Mammary epithelial cell (primary cell): ENCODE measurements at regions of chr9 and their contacts with region 1.

Region 1: DNA sequence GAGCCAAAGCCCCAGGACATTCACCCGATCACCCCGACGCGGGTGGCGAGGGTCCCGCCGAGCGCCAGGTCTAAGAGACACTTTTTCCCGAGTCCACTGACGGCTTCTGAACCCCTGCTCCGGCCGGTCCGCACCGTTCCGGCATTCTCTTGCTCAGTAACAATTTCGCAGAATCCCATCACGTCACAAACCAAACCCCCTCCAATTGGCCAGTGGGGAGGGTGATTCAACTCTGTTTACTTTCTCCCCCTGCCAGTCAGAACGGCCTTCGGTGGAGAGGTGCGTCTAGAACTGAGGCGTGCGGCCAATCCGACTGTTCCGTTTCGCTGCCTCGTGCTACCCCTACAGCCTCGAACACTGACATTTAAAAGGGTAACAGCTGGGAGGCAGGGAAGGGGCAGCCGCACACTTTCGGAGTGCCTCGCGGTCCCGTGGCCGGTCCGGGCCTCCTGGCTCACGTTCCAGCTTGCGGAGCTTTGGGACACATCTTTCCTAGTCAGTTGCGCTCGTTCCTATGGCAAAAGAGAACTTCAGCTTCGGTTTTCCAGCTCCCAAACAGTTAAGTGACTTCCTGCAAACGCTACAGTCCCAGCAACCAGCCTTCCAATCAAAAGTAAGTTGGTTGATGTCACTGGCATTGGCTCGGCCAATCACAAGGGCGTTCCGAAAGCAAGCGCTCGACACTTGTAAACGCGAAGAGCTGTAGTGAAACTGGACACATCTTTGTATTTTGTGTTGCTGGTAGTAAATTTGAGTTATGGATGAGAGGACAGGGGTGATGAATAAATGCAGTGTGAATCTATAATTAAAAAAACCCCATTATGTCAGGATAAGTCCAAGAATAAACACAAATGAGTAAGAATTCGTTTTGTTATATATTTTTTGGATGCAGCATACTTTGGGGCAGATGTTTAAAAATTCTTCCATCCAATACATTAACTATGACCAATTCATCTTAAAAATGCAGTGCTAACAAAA is at the start of gene KLF9:
- DNase-seq: peak; percentile 97
- H3K4me3 ChIP-seq: peak within 1 kb of the TSS; percentile 53 to 94 (median 78)
- H3K27ac ChIP-seq: peak within 1 kb of the TSS; percentile 89
- H3K4me1 ChIP-seq: peaks cover 29% of the 10 kb centered on the region
- H3K27me3 ChIP-seq: no peaks in the 10 kb centered on the region
- CTCF ChIP-seq: no peak
- total RNA-seq, gene KLF9: 5.5 to 10.8 TPM

Region 2: DNA sequence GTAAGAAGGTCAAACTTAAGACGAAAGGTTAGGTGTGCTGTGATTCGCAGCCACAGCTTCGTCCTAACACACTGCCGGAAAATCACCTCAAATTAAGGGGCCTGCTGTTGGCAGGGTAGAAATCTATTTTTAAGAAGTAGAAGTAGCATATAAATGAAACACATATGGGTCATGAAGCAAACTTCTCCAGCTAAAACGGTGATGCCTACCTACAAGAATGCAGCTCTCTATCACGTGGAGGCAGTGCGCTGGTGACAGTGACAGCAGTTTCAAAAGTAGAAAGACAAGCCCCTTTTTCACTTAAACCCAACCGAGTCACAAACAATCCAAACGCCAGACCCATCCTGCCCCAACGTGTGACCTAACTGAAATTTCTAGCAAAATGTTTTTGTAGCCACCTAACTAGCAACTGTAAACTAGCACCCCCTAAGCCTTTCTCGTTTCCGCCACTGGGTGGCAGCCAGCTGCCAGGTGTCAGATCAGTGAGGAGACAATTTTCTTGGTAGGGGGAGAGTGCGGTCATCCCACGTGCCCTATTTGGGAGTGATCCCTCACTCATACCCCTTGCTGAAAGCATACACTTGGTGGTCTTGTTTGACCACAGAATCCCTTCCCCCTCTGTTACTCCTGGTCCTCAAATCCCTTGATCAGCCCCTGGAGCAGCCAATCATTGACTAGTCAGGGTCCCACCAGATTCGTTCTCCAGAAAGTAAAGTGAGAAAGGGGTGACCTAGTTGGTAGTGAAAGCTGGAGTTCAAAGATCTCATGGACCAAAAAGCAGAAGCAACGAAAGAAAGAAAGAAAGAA is 442.2 kb before region 1 on chr9:
- CTCF ChIA-PET with region 1: no interaction called
- dilution Hi-C with region 1: no loop called
- in situ Hi-C with region 1: no loop called
- intact Hi-C with region 1: loop called (anchors 10 kb)
- DNase-seq: peak; percentile 46
- H3K4me3 ChIP-seq: no peak overlapping the region
- H3K27ac ChIP-seq: no peak overlapping the region
- H3K4me1 ChIP-seq: peaks cover 13% of the 10 kb centered on the region
- H3K27me3 ChIP-seq: no peaks in the 10 kb centered on the region
- CTCF ChIP-seq: peak; percentile 89 to 97

Region 3: DNA sequence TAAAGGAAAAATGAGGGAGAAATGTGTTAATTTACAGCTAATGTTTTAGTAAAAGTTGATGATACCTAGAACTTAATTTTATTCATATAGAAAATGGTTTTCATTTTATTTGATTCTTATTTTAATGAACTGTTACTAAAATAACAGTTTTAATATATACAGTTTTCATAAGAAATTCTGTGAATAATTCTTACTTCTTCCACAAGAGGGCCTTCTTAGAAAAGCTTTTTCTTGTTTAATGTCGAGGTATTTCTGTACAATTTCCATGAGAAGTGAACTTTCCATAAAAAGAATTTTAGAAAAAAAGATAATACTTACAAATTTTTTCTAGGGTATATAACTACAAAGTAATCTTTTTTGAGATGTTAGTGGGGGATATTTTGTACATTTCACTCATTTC is 73.5 kb before region 1 on chr9:
- CTCF ChIA-PET with region 1: no interaction called
- dilution Hi-C with region 1: no loop called
- in situ Hi-C with region 1: no loop called
- intact Hi-C with region 1: loop called (anchors 5 kb)
- DNase-seq: no peak
- H3K4me3 ChIP-seq: no peak overlapping the region
- H3K27ac ChIP-seq: no peak overlapping the region
- H3K4me1 ChIP-seq: no peaks in the 10 kb centered on the region
- H3K27me3 ChIP-seq: no peaks in the 10 kb centered on the region
- CTCF ChIP-seq: peak; percentile 31 to 43

Region 4: GRCh38 chr9:70587201-70587600 is 173.1 kb after region 1 on chr9:
- CTCF ChIA-PET with region 1: no interaction called
- dilution Hi-C with region 1: no loop called
- in situ Hi-C with region 1: loop called in 1 of 2 experiments (anchors 10 kb)
- intact Hi-C with region 1: no loop called
- DNase-seq: no peak
- H3K4me3 ChIP-seq: no peak overlapping the region
- H3K27ac ChIP-seq: no peak overlapping the region
- H3K4me1 ChIP-seq: peaks cover 16% of the 10 kb centered on the region
- H3K27me3 ChIP-seq: no peaks in the 10 kb centered on the region
- CTCF ChIP-seq: no peak

Region 5: GRCh38 chr9:70902692-70903131 is 488.6 kb after region 1 on chr9:
- CTCF ChIA-PET with region 1: no interaction called
- dilution Hi-C with region 1: no loop called
- in situ Hi-C with region 1: no loop called
- intact Hi-C with region 1: loop called (anchors 10 kb)
- DNase-seq: peak; percentile 97
- H3K4me3 ChIP-seq: peak overlapping the region in 1 of 3 experiments; percentile 8
- H3K27ac ChIP-seq: peak overlapping the region; percentile 66
- H3K4me1 ChIP-seq: peaks cover 25% of the 10 kb centered on the region
- H3K27me3 ChIP-seq: no peaks in the 10 kb centered on the region
- CTCF ChIP-seq: no peak